ENCODE measurements at regions of chr2 and their contacts with region 1.

Region 1: GRCh38 chr2:27079233-27080139 is 1.1 kb downstream of the EMILIN1 start:
- DNase-seq: no peak
- CTCF ChIP-seq: no peak

Region 2: DNA sequence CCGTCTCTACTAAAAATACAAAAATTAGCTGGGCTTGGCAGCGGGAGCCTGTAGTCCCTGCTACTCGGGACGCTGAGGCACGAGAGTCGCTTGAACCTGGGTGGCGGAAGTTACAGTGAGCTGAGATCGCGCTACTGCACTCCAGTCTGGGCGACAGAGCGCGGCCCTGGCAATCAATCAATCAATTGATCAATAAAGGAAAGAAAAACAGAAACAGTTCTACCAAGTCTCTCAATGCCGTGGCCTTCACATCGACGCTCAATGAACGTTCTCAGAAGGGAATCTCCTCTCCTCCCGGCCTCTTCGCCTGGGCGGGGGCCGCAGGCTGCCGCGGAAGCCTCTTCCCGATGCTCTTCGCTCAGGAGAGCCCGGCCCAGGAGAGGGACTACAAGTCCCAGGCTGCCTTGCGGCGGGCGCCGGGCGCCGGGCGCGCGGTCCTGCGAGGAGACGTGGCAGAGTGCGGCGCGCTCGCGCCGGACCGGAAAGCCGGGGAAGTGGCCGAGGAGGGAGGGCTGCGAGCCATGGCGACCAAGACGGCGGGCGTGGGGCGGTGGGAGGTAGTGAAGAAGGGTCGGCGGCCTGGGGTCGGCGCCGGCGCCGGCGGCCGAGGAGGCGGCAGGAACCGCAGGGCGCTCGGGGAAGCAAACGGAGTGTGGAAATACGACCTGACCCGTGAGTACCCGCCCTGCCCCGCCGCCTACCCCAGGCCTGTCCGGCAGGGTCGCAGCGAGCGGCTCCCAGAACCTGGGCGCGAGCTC is 46.8 kb before region 1 on chr2 and contains the start of gene TMEM214:
- CTCF ChIA-PET with region 1: interaction called, 10 read pairs
- POLR2A ChIA-PET with region 1: no interaction called
- DNase-seq: peak; percentile 96
- CTCF ChIP-seq: no peak

Region 3: DNA sequence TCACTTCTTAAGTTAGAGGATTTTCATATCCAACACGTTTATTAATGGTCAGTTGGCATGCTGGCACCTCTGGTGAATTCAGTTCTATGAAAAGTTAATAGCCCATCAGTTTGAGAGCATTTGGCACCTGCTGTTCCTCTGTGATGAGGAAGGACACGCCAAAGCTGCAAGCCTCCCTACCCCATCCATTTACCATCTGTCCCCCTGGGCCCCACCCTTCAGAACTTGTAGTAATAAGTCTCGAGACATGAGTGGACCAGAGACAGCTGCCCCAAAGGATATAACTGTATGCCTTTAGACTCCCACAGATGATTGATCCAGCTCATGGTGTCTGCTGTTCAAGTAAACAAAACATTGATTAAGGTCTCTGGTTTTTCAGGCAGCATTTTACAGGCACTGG is 14.4 kb before region 1 on chr2:
- CTCF ChIA-PET with region 1: interaction called, 42 read pairs
- POLR2A ChIA-PET with region 1: interaction called, 3 read pairs
- DNase-seq: no peak
- CTCF ChIP-seq: no peak